HepG2 (cell line): ENCODE measurements at regions of chr6 and their contacts with region 1.

Region 1: DNA sequence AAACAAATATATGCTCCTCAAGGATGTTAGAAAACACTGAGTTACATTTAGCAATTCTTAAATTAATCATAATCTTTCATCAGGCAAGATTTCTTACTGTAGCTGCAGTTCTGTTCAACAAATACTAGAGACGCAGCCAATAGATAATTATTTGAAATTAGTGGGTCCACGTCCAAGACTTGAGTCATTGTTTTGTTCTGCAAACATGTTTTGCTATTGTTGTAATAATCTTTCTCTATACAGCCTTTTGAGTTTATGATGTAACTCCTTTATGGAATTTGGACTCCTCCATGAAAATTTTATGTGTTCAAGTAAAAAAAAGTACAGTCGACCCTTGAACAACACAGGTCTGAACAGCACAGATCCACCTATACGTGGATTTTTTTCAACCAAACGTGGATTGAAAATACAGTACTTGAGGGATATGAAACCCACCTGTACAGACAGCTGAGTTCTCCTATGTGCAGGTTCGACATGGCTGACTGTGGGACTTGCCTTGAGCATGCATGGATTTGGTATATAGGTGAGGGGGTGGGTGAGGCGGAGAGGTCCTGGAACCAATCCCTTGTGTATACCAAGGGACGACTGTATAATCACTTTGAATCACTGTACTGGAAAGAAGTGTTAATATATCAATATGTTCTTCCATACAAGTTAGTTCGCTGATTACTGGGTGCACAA is 41.3 kb upstream of the SLC22A16 start:
- DNase-seq: peak; percentile 23
- ATAC-seq: peak; percentile 76
- H3K4me3 ChIP-seq: peak overlapping the region; percentile 21 to 61 (median 48); a peak in 5 of 6 replicates
- H3K27ac ChIP-seq: peak overlapping the region; percentile 53
- H3K4me1 ChIP-seq: peaks cover 48% of the 10 kb centered on the region
- H3K27me3 ChIP-seq: no peaks in the 10 kb centered on the region
- CTCF ChIP-seq: no peak
- EP300 ChIP-seq: no peak
- POLR2A ChIP-seq: no peak
- RAD21 ChIP-seq: no peak

Region 2: DNA sequence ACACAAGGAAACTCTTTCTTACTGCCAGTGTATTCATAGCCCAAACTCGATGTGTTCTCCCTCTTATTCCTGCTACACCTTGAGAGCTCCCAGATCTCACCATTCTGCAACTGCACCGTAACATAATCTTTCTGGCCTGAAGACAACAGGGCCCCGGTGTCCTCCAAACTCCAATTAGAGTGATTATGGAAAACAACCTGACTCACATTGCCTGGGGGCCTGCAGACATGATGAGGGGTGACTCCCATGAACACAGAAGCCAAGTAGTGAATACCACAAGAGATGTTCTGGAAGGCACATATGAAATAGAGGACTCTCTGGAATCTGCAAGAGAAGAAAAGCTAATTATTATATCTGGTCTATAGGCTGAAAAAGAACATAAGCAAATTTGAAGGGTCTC is 61.0 kb before region 1 on chr6:
- CTCF ChIA-PET with region 1: no interaction called
- POLR2A ChIA-PET with region 1: no interaction called
- in situ Hi-C with region 1: no loop called
- intact Hi-C with region 1: loop called (anchors 2 kb)
- DNase-seq: no peak
- ATAC-seq: no peak
- H3K4me3 ChIP-seq: no peak overlapping the region
- H3K27ac ChIP-seq: no peak overlapping the region
- H3K4me1 ChIP-seq: no peaks in the 10 kb centered on the region
- H3K27me3 ChIP-seq: no peaks in the 10 kb centered on the region
- CTCF ChIP-seq: no peak
- EP300 ChIP-seq: no peak
- POLR2A ChIP-seq: no peak
- RAD21 ChIP-seq: no peak